MCF 10A (cell line): ENCODE measurements at regions of chr3 and their contacts with region 1.

Region 1: DNA sequence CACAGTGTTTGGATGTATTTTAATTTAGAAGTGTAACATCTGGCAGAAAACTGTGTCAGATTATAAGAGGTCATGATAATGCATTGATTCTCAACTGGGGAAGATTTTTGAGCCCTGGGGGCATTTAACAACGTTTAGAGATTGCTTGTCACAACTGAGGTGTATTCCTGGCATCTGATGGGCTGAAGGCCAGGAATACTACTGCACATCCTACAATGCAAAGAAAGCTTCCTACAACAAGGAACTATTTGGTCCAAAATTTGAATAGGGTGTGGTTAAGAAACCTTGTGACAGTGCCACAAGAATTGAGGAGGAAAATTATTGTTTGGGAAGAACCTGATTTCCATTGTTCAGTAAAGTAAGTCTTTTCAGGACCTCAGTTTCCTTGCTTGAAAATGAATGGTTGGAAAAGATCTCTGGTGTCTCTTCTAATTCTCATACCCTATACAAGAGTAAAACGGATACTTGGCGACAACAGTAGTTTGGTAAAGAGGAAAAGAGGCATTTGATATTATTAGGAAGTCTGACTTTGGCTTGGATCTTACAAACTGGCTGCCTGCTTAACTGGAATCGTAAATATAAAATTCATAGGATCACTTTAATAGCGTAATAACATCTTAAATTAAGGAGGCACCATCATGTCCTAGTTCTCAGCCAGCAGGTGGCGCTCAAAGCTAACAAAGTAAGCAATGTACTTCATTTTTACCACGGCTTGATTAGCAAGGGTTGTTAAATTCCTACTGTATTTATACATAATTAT is 4.3 kb downstream of the DAZL start:
- DNase-seq: peak; percentile 80
- H3K4me3 Mint-ChIP-seq: no peak overlapping the region
- H3K27ac Mint-ChIP-seq: no peak overlapping the region
- H3K4me1 Mint-ChIP-seq: no peaks in the 10 kb centered on the region
- H3K27me3 Mint-ChIP-seq: peaks cover 54% of the 10 kb centered on the region
- CTCF ChIP-seq: peak; percentile 69

Region 2: GRCh38 chr3:16945330-16945729 is 344.4 kb after region 1 on chr3:
- CTCF ChIA-PET with region 1: no interaction called
- POLR2A ChIA-PET with region 1: no interaction called
- intact Hi-C with region 1: loop called (anchors 1 kb)
- DNase-seq: peak; percentile 50
- H3K4me3 Mint-ChIP-seq: no peak overlapping the region
- H3K27ac Mint-ChIP-seq: no peak overlapping the region
- H3K4me1 Mint-ChIP-seq: peaks cover 8% of the 10 kb centered on the region
- H3K27me3 Mint-ChIP-seq: peaks cover 49% of the 10 kb centered on the region
- CTCF ChIP-seq: no peak